Posterior cingulate gyrus (tissue), 11 donors: ENCODE measurements at regions of chr2 and their contacts with region 1.

Region 1: GRCh38 chr2:157777427-157777826 is 98.7 kb downstream of the ACVR1 start:
- DNase-seq: peak in 4 of 10 donors; percentile 23 to 50 (median 35)

Region 2: DNA sequence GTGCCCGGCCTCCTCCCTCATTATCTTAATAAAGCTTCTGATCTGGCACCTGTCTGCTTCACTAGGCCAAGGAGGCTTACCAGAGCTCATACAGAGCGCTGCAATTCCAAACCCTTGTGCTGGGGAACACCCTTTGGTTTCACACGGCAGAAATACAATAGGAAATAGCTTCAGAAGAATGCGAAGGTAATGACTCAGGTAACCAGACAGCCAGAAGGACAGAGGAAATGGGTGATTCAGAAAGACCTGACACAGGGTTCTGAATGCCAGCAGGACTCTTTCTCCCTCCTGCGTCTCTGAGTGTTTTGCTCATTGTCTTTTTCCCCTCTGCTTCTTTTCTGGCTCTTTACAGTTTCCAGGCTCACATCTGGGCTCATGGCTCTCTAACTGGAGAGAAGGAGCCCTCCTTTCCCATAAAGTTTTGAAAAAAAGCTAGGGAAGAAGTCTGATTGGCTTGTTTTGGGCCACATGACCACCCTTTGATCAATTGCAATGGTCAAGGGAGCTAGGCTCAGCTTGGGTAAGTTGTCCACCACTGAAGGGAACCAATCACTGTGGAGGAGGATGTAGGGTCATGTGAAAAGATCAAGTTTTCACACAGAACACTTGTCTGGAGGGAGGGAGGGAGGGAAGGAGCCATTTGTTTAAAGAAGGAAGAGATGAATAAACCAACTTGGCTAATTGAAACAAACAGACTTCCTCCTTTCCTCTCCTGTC is 233.8 kb after region 1 on chr2:
- intact Hi-C with region 1: loop called (anchors 2 kb)
- DNase-seq: no peak